Testis (tissue), 5 donors: ENCODE measurements at regions of chr11 and their contacts with region 1.

Region 1: GRCh38 chr11:57868491-57868890 is 106.9 kb downstream of the CTNND1 start:
- DNase-seq: no peak
- H3K4me3 ChIP-seq: no peak overlapping the region
- H3K27ac ChIP-seq: no peak overlapping the region
- H3K4me1 ChIP-seq: no peaks in the 10 kb centered on the region
- H3K27me3 ChIP-seq: no peaks in the 10 kb centered on the region
- CTCF ChIP-seq: no peak
- POLR2A ChIP-seq: no peak

Region 2: GRCh38 chr11:57800444-57801182 is 67.9 kb before region 1 on chr11:
- intact Hi-C with region 1: no loop called
- DNase-seq: no peak
- H3K4me3 ChIP-seq: no peak overlapping the region
- H3K27ac ChIP-seq: peak overlapping the region; percentile 19 to 28
- H3K4me1 ChIP-seq: peaks cover 35% of the 10 kb centered on the region
- H3K27me3 ChIP-seq: no peaks in the 10 kb centered on the region
- CTCF ChIP-seq: peak; percentile 84 to 93 (median 90)
- POLR2A ChIP-seq: no peak

Region 3: DNA sequence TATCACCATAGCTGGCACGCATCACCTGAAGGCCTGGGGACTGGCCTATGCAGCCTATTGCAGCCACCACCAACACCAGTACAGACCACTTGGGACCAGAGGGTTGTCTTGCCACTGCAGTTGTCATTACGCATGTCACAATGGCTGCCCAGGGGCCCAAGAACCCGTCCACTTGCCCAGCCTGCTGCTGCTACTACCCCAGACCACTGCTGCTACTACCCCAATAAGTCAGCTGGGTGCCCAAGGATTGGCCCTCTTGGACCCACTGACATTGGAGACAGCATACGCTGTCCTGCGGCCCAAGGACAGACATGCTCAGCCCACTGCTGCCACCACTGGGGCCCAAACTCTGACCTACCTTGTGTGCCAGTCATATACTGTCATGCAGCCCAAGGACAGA is 52.5 kb after region 1 on chr11:
- intact Hi-C with region 1: loop called (anchors 10 kb)
- DNase-seq: no peak
- H3K4me3 ChIP-seq: no peak overlapping the region
- H3K27ac ChIP-seq: no peak overlapping the region
- H3K4me1 ChIP-seq: no peaks in the 10 kb centered on the region
- H3K27me3 ChIP-seq: no peaks in the 10 kb centered on the region
- CTCF ChIP-seq: no peak
- POLR2A ChIP-seq: no peak

Region 4: DNA sequence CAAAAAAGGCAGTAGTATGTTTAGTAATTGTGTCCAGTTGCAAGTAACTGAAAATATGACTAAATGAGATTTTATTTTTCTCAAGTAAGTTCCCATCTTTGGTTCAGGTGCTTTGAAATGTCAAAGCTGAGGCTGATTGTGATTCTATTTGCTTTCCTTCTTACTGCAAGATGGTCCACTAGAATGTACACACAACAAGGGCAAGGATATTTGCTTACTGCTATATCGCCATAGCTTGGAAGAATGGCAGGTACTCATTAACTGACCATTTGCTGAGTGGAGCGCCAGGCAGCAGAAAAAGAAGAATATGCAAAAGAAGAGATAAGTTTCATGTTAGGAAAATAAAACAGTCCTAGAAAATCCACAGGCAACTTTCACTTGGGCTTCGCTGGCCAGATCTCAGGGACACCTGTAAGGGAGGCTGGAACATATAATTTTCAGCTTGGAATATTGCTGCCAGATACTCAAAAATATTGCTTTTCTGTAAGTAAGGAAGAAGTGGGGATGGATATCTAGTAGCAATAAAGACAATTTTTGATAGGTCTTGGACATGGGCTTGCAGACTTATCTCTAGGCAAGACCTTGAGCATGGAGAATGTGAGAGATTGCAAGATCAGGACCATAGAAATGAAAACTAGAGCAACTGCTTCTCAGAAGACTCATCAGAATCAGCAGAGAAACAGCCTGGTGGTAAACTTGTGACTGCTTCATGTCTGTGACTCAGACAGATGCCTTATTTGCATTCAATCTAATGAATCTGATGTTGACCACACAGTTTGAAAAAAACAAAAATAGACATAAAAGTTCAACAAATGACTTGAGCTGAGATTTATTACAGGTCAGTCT is 110.4 kb after region 1 on chr11:
- intact Hi-C with region 1: no loop called
- DNase-seq: no peak
- H3K4me3 ChIP-seq: no peak overlapping the region
- H3K27ac ChIP-seq: no peak overlapping the region
- H3K4me1 ChIP-seq: no peaks in the 10 kb centered on the region
- H3K27me3 ChIP-seq: no peaks in the 10 kb centered on the region
- CTCF ChIP-seq: no peak
- POLR2A ChIP-seq: no peak